ENCODE measurements at regions of chr2 and their contacts with region 1.

Region 1: DNA sequence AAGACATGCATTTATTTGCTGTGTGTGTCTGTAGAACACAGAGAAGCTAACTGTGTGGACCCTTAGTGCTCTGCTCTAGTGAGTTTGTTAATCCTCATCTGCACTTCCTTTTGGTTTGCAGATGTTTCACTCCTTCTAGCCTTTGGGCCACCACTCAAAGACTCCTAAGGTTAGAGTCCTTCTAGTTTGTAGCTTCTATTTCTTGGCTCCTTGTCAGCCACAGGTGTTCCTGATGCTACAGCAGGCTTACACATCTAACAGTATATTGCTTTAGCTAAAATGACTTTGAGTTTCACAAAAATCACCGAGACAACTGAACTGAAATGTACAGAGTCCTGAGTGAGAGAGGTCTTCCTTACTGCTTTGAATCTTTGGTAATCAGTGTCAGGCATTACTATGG is 551.4 kb downstream of the NRXN1 start:
- DNase-seq: no peak
- H3K4me3 ChIP-seq: no peak overlapping the region
- CTCF ChIP-seq: no peak

Region 2: DNA sequence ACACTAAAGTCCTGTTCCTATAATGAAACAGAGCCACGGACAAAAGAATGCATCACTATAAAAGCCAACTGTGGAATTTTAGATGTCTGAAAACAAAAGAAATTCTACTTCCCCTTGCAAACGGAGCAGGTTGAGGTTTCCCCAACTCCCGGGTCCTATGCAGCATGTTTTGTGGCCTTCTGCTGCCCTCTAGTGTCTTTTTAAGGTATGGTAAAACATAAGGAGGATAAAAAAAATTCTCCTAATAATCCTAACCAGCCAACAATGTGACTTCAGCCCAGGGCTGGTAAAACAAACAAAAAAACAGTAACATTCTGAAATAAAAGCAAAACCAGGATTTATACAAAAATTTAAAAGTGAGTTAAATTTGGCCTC is 12.0 kb after region 1 on chr2:
- CTCF ChIA-PET with region 1: interaction called, 12 read pairs
- POLR2A ChIA-PET with region 1: no interaction called
- DNase-seq: peak; percentile 1
- H3K4me3 ChIP-seq: no peak overlapping the region
- CTCF ChIP-seq: peak; percentile 51

Measured in AG04449 (cell line).